ENCODE measurements at regions of chr17 and their contacts with region 1.

Region 1: GRCh38 chr17:13750816-13751722 is 149.3 kb upstream of the HS3ST3A1 start:
- DNase-seq: peak in 1 of 2 donors; percentile 14
- H3K4me3 ChIP-seq: no peak overlapping the region
- H3K27ac ChIP-seq: no peak overlapping the region
- H3K4me1 ChIP-seq: no peaks in the 10 kb centered on the region
- H3K27me3 ChIP-seq: no peaks in the 10 kb centered on the region
- CTCF ChIP-seq: no peak
- EP300 ChIP-seq: no peak
- POLR2A ChIP-seq: no peak

Region 2: GRCh38 chr17:13698832-13699231 is 52.2 kb before region 1 on chr17:
- intact Hi-C with region 1: loop called (anchors 10 kb)
- DNase-seq: no peak
- H3K4me3 ChIP-seq: no peak overlapping the region
- H3K27ac ChIP-seq: no peak overlapping the region
- H3K4me1 ChIP-seq: no peaks in the 10 kb centered on the region
- H3K27me3 ChIP-seq: no peaks in the 10 kb centered on the region
- CTCF ChIP-seq: no peak
- EP300 ChIP-seq: no peak
- POLR2A ChIP-seq: no peak

Region 3: GRCh38 chr17:13865650-13866049 is 114.6 kb after region 1 on chr17:
- intact Hi-C with region 1: no loop called
- DNase-seq: peak in 1 of 2 donors; percentile 18
- H3K4me3 ChIP-seq: no peak overlapping the region
- H3K27ac ChIP-seq: no peak overlapping the region
- H3K4me1 ChIP-seq: no peaks in the 10 kb centered on the region
- H3K27me3 ChIP-seq: no peaks in the 10 kb centered on the region
- CTCF ChIP-seq: no peak
- EP300 ChIP-seq: no peak
- POLR2A ChIP-seq: no peak